ENCODE measurements at regions of chr17 and their contacts with region 1.

Region 1: GRCh38 chr17:13035420-13035819 is 17.6 kb upstream of the ELAC2 start:
- DNase-seq: no peak
- H3K4me3 ChIP-seq: no peak overlapping the region
- H3K27ac ChIP-seq: no peak overlapping the region
- H3K4me1 ChIP-seq: no peaks in the 10 kb centered on the region
- H3K27me3 ChIP-seq: no peaks in the 10 kb centered on the region
- CTCF ChIP-seq: no peak
- EP300 ChIP-seq: no peak
- POLR2A ChIP-seq: no peak

Region 2: DNA sequence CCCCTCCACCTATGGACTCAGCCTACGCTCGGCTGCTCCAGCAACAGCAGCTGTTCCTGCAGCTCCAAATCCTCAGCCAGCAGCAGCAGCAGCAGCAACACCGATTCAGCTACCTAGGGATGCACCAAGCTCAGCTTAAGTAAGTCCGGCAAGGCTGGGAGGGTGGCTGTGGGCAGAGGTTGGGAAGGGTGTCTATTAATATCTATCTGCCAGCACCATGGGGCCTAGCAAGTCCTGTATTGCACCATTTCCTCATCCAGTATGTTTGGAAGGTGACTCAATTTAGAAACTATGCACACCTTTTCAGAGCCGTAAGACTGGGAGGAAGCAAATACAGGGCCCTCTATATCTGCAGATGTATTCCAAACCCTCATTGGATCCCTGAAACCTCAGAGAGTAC is 291.1 kb before region 1 on chr17:
- intact Hi-C with region 1: no loop called
- DNase-seq: no peak
- H3K4me3 ChIP-seq: no peak overlapping the region
- H3K27ac ChIP-seq: no peak overlapping the region
- H3K4me1 ChIP-seq: no peaks in the 10 kb centered on the region
- H3K27me3 ChIP-seq: no peaks in the 10 kb centered on the region
- CTCF ChIP-seq: no peak
- EP300 ChIP-seq: no peak
- POLR2A ChIP-seq: no peak

Region 3: GRCh38 chr17:12911239-12911638 is 124.2 kb before region 1 on chr17:
- intact Hi-C with region 1: no loop called
- DNase-seq: no peak
- H3K4me3 ChIP-seq: no peak overlapping the region
- H3K27ac ChIP-seq: no peak overlapping the region
- H3K4me1 ChIP-seq: no peaks in the 10 kb centered on the region
- H3K27me3 ChIP-seq: no peaks in the 10 kb centered on the region
- CTCF ChIP-seq: no peak
- EP300 ChIP-seq: no peak
- POLR2A ChIP-seq: no peak

Region 4: DNA sequence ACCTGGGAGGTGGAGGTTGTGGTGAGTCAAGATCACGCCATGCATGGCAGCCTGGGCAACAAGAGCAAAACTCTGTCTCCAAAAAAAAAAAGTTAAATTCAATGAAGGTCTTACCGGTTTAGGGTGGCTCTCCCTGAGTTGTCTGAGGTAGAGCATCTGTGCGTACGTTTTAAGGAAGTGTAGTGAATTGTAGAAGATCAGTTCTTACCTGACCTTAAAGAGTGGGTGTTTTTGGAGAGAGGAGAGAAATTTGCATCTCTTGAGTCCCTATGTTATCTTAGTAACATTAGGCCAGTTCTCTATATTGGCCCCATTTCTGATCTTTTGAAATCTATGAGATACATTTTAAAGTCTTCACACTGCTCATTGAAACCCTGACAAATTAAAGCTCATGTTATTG is 73.8 kb before region 1 on chr17:
- intact Hi-C with region 1: loop called in 1 of 4 experiments (anchors 2 kb)
- DNase-seq: no peak
- H3K4me3 ChIP-seq: no peak overlapping the region
- H3K27ac ChIP-seq: no peak overlapping the region
- H3K4me1 ChIP-seq: no peaks in the 10 kb centered on the region
- H3K27me3 ChIP-seq: no peaks in the 10 kb centered on the region
- CTCF ChIP-seq: no peak
- EP300 ChIP-seq: no peak
- POLR2A ChIP-seq: no peak

Region 5: DNA sequence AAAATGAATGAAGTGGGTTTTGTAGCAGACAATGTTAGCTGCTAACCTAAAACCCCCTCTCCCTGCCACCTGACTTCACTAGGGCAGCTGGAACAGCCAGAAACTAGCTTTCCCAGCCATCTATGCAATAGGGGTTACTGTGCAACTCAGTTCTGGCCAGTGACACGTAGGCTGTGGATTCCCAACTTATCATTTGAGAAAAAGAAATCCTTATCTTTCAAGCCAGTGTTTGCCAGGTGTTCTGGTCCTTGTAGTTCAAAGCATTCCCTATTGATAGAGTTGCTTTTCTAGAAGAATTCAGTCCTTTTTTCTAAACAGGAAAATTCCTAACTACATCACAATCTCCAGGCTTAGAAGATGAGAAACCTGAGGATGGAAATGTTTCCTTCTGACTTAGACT is 126.9 kb after region 1 on chr17:
- intact Hi-C with region 1: no loop called
- DNase-seq: no peak
- H3K4me3 ChIP-seq: no peak overlapping the region
- H3K27ac ChIP-seq: no peak overlapping the region
- H3K4me1 ChIP-seq: no peaks in the 10 kb centered on the region
- H3K27me3 ChIP-seq: no peaks in the 10 kb centered on the region
- CTCF ChIP-seq: no peak
- EP300 ChIP-seq: no peak
- POLR2A ChIP-seq: no peak